Psoas muscle (tissue), 8 donors: ENCODE measurements at regions of chr5 and their contacts with region 1.

Region 1: GRCh38 chr5:45038366-45038987 is 229.7 kb downstream of the MRPS30 start:
- DNase-seq: no peak
- ATAC-seq: peak in 3 of 4 donors; percentile 56 to 82 (median 57)
- H3K4me3 ChIP-seq: no peak overlapping the region
- H3K27ac ChIP-seq: no peak overlapping the region
- H3K4me1 ChIP-seq: peaks cover 10% of the 10 kb centered on the region
- H3K27me3 ChIP-seq: no peaks in the 10 kb centered on the region
- CTCF ChIP-seq: peak; percentile 64

Region 2: DNA sequence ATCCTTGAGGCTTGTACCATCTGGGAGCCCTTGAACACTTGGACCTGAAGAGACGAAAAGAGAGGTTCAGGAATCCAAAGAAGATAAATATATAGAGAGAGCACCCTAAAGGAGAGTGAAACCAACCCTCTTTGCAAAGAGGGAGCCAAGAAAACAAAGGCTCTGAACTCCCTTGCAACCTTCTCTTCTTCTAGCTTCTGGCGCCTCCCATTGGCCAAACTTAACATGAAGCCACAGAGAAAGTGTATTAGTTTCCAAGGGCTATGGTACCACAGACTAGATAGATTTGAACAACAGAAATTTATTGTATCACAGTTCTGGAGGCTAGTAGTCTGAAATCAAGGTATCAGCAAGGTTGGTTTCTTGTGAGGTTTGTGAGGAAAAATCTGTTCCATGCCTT is 482.6 kb after region 1 on chr5:
- intact Hi-C with region 1: loop called (anchors 2 to 5 kb)
- DNase-seq: no peak
- ATAC-seq: peak in 3 of 4 donors; percentile 49 to 75 (median 50)
- H3K4me3 ChIP-seq: no peak overlapping the region
- H3K27ac ChIP-seq: no peak overlapping the region
- H3K4me1 ChIP-seq: no peaks in the 10 kb centered on the region
- H3K27me3 ChIP-seq: no peaks in the 10 kb centered on the region
- CTCF ChIP-seq: peak; percentile 47

Region 3: GRCh38 chr5:45696206-45696836 is 657.8 kb after region 1 on chr5 and contains the start of gene HCN1:
- intact Hi-C with region 1: loop called in 1 of 2 experiments (anchors 5 kb)
- DNase-seq: peak; percentile 69 to 89
- ATAC-seq: peak; percentile 97 to 100 (median 99)
- H3K4me3 ChIP-seq: peak within 1 kb of the TSS; percentile 67
- H3K27ac ChIP-seq: no peak within 1 kb of the TSS
- H3K4me1 ChIP-seq: no peaks in the 10 kb centered on the region
- H3K27me3 ChIP-seq: peaks cover 0 to 20% (median 7%) of the 10 kb centered on the region in 3 donors
- CTCF ChIP-seq: peak; percentile 74
- total RNA-seq, gene HCN1: 0.20 to 0.36 TPM in 2 of 4 donors, not detected in the others